AG04449 (cell line): ENCODE measurements at regions of chr7 and their contacts with region 1.

Region 1: DNA sequence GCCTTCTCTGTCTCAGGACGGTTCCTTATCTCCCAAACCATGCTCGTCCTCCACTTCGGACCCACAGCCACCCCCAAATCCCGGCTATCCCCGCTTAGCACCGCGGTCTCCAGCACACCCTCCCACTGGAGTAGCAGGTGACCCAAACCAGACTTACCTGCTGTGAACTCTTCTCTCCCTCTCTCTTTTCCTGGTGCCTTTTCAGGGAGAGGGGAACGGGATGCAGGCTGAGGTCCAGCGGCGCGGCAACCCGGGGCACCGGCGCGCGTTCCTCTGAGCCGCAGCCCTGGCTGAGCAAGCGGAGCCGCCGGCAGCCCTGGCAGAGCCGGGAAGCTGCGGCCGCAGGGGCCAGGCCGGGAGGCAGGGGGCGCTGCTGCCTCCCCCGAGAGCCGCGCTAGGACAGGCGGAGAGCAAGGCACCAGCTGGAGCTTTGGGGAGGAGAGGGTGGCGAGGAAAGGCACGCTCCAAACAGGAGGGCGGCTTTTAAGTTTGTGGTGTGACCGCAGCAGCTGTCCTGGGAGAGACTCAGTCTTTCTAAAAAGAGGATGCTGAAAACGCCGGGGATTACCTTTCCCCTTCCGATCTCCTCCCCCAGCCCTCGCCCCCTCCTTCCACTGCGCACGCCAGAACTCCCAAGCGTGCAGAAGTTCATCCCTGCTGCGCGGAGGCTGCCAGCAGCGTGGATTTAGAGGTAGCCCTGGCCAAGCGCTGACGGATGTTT is at the start of gene SEMA3D:
- DNase-seq: no peak
- H3K4me3 ChIP-seq: peak within 1 kb of the TSS; percentile 82
- CTCF ChIP-seq: peak; percentile 96

Region 2: GRCh38 chr7:84490661-84491060 is 696.0 kb before region 1 on chr7:
- CTCF ChIA-PET with region 1: no interaction called
- POLR2A ChIA-PET with region 1: no interaction called
- DNase-seq: no peak
- H3K4me3 ChIP-seq: no peak overlapping the region
- CTCF ChIP-seq: peak; percentile 5

Region 3: GRCh38 chr7:84975586-84976185 is 211.0 kb before region 1 on chr7:
- CTCF ChIA-PET with region 1: no interaction called
- POLR2A ChIA-PET with region 1: no interaction called
- DNase-seq: no peak
- H3K4me3 ChIP-seq: no peak overlapping the region
- CTCF ChIP-seq: no peak

Region 4: GRCh38 chr7:85070967-85071628 is 115.6 kb before region 1 on chr7:
- CTCF ChIA-PET with region 1: interaction called, 11 read pairs
- POLR2A ChIA-PET with region 1: no interaction called
- DNase-seq: peak; percentile 59
- H3K4me3 ChIP-seq: no peak overlapping the region
- CTCF ChIP-seq: no peak

Region 5: DNA sequence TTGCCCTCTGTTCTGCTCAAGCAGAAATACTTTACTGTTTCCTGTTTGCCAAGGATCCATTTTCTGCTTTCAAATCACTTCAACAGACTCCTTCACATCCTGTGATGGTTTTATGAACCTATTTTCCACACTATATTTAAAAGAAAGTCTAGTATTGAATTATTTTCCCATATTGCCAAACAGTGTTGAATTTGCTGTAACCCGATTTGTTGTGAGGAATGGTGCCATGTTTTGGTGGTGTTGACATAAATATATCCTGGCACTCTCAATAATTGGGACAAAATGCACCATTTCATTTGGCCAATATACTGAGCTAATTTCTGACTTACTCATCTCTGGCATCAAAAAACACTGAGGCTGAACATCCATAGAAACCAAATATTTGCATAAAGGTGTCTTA is 615.5 kb after region 1 on chr7:
- CTCF ChIA-PET with region 1: no interaction called
- POLR2A ChIA-PET with region 1: no interaction called
- DNase-seq: no peak
- H3K4me3 ChIP-seq: no peak overlapping the region
- CTCF ChIP-seq: no peak